Sigmoid colon (tissue), 7 donors: ENCODE measurements at regions of chr15 and their contacts with region 1.

Region 1: GRCh38 chr15:64841258-64842095 is at the start of gene PLEKHO2:
- DNase-seq: peak; percentile 99
- H3K4me3 ChIP-seq: peak within 1 kb of the TSS; percentile 79 to 99 (median 97)
- H3K27ac ChIP-seq: peak within 1 kb of the TSS; percentile 92 to 99 (median 98)
- H3K4me1 ChIP-seq: peaks cover 0 to 51% (median 44%) of the 10 kb centered on the region in 4 donors
- H3K27me3 ChIP-seq: no peaks in the 10 kb centered on the region
- CTCF ChIP-seq: peak in 1 of 4 experiments; percentile 22
- EP300 ChIP-seq: no peak
- POLR2A ChIP-seq: peak; percentile 76 to 82
- total RNA-seq, gene PLEKHO2: 20.1 to 43.4 (median 23.0) TPM

Region 2: DNA sequence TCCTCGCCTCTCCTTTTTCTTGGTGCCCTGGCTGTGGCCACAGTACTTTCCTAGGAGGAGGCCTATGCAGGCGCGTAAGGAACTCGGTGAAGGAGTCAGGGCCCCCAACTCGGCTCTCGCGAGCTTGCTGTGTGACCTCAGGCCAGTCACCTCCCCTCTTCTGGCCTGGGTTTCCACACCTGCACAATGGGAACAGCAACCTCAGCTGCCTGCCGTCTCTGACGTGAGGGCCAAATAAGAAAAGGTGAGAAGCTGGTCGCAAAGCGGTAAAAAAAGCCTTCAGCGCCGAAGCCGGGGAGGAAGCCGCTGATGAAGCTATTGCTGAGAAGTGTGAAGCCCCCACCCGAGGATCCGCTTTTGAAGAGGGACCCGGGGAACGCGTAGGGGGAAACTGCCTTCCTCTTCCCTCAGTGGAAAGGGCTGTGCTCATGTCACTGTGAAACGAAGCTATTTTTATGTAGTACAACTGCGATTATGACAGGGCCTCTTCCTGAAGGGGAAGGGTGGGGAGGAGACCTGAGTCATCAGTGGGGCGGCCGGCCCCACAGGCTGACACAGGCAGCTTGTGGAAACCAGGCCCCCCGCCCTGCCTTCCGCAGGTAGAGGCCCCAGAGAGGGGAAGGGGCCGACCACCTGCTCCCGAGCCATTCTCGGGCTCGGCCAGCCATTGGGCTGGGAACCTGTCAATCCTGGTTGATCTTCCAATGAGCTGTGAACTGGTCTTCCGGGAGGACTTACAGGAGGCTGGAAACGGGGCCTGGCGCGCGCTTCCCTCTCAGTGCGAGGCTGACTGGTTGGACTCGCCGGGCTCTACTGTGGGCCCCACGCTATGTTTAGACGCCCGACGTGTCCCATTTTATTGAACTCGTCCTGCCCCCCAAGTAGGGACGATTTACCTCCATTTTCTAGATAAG is 52.3 kb after region 1 on chr15:
- intact Hi-C with region 1: loop called (anchors 2 kb)
- DNase-seq: peak; percentile 97
- H3K4me3 ChIP-seq: peak overlapping the region in 3 of 4 donors; percentile 24 to 41 (median 40)
- H3K27ac ChIP-seq: peak overlapping the region; percentile 77 to 85 (median 80)
- H3K4me1 ChIP-seq: peaks cover 0 to 50% (median 39%) of the 10 kb centered on the region in 4 donors
- H3K27me3 ChIP-seq: no peaks in the 10 kb centered on the region
- CTCF ChIP-seq: no peak
- EP300 ChIP-seq: no peak
- POLR2A ChIP-seq: no peak

Region 3: GRCh38 chr15:64905119-64905831 is 63.8 kb after region 1 on chr15:
- intact Hi-C with region 1: loop called (anchors 5 kb)
- DNase-seq: peak; percentile 89
- H3K4me3 ChIP-seq: peak overlapping the region; percentile 7 to 47 (median 38)
- H3K27ac ChIP-seq: peak overlapping the region in 3 of 4 donors; percentile 28 to 64 (median 41)
- H3K4me1 ChIP-seq: peaks cover 0 to 10% (median 3%) of the 10 kb centered on the region in 4 donors
- H3K27me3 ChIP-seq: no peaks in the 10 kb centered on the region
- CTCF ChIP-seq: peak; percentile 81 to 92 (median 88)
- EP300 ChIP-seq: no peak
- POLR2A ChIP-seq: no peak

Region 4: DNA sequence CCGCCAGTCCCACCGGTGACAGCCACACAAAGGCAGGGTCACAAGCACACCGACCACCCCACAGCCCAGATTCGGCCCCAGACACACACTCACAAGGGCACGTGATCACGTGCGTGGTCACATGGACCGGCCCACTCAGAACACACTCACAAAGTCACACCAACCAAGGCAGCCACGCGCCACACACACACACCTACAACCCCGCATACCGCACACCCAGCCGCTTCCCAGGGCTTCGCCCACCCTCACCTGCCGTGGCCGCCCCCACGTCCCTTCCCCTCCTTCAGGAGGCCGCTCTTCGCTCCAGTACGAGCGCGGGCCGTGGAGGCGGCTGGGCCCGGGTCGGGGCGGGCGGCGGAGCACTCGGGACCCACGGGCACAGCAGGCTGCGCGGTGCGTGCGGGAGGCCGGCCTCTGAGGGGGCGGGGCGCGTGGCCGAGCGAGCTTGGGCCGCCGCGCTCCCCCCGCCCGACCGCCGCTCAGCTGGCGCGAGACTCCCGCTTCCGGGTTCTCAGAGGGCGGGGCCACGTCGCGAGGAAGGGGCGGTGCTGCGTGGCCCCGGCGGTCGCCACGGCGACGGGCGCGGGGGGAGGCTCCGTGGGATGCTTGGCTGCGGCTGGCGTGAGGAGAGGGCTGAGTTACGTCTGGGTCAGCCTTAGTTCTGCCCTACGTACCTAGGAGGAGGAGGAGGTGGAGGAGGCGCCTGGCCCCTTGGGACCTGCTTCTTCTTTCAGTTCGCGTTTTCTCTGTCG is 148.1 kb after region 1 on chr15 and contains the start of gene SPG21:
- intact Hi-C with region 1: loop called (anchors 5 kb)
- DNase-seq: peak; percentile 96
- H3K4me3 ChIP-seq: peak within 1 kb of the TSS; percentile 74 to 100 (median 81)
- H3K27ac ChIP-seq: peak within 1 kb of the TSS; percentile 92 to 99 (median 96)
- H3K4me1 ChIP-seq: peaks cover 0 to 35% (median 27%) of the 10 kb centered on the region in 4 donors
- H3K27me3 ChIP-seq: no peaks in the 10 kb centered on the region
- CTCF ChIP-seq: no peak
- EP300 ChIP-seq: no peak
- POLR2A ChIP-seq: peak in 1 of 2 donors; percentile 54
- total RNA-seq, gene SPG21: 95.7 to 116 (median 103) TPM